HEK293 (cell line): ENCODE measurements at regions of chr19 and their contacts with region 1.

Region 1: GRCh38 chr19:35066691-35067563 is 25.4 kb downstream of the HPN start:
- H3K4me3 ChIP-seq: no peak overlapping the region
- H3K27ac ChIP-seq: no peak overlapping the region
- H3K4me1 ChIP-seq: peaks cover 10% of the 10 kb centered on the region
- CTCF ChIP-seq: peak; percentile 86

Region 2: DNA sequence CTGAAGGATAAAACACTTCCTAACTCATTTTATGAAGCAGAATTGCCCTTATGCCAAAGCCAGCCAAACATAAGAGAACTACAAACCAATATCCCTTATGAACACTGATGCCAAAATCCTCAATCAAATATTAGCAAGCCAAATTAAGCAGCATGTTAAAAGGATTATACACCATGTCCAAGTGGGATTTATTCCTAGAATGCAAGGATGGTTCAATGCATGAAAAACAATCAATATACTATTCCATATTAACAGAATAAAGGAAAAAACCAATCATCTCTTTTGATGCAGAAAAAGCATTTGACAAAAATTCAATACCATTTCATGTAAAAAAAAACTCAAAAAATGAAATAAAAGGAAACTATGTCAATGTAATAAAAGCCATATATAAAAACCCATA is 113.8 kb before region 1 on chr19:
- CTCF ChIA-PET with region 1: no interaction called
- POLR2A ChIA-PET with region 1: no interaction called
- H3K4me3 ChIP-seq: no peak overlapping the region
- H3K27ac ChIP-seq: no peak overlapping the region
- H3K4me1 ChIP-seq: no peaks in the 10 kb centered on the region
- CTCF ChIP-seq: no peak

Region 3: GRCh38 chr19:34963573-34964409 is 103.1 kb before region 1 on chr19 and contains the start of gene ZNF792:
- CTCF ChIA-PET with region 1: interaction called, 13 read pairs
- POLR2A ChIA-PET with region 1: no interaction called
- H3K4me3 ChIP-seq: peak within 1 kb of the TSS; percentile 57
- H3K27ac ChIP-seq: peak within 1 kb of the TSS; percentile 84
- H3K4me1 ChIP-seq: peaks cover 16% of the 10 kb centered on the region
- CTCF ChIP-seq: peak; percentile 47; the same call in 1 of the 2 replicates

Region 4: DNA sequence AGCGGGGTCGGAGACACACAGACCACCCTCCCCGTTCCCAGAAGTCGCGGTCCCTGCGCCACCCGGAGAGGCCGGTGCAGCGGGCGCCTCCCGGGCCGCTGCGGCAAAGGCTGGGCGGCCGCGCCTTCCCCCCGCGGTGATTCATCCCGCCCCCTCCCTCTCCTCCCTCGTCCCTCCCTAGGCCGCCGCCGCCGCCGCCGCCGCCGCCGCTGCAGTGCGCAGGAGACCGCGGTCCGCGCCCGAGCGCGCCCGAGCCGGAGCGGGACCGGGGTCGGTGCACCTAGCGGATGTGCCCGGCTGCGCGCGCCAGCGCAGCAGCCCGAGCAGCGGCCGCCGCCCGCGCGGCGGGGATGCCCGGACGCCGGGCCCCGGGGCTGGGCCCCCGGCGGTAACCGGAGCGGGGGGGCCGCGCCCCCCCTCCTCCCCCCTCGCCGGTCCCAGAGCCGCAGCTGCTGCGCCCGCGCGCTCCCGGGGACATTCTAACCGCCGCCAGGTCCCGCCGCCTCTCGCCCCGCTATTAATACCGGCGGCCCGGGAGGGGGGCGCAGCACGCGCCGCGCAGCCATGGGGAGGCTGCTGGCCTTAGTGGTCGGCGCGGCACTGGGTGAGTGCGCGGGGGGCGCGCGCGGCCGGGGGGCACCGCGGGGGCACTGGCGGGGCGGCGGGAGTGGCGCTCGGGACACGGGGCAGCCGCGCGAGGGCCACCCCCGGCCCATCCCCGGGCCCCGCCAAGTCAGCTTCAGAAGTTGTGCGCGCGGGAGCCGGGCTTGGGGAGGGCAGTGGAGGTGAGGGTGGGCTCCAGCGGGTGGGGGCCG is 36.5 kb before region 1 on chr19 and contains the start of gene SCN1B:
- CTCF ChIA-PET with region 1: interaction called, 11 read pairs
- POLR2A ChIA-PET with region 1: no interaction called
- H3K4me3 ChIP-seq: peak within 1 kb of the TSS; percentile 42
- H3K27ac ChIP-seq: peak within 1 kb of the TSS; percentile 74; the same call in 1 of the 2 replicates
- H3K4me1 ChIP-seq: peaks cover 14% of the 10 kb centered on the region
- CTCF ChIP-seq: no peak

Region 5: GRCh38 chr19:35080613-35081170 is 13.8 kb after region 1 on chr19:
- CTCF ChIA-PET with region 1: interaction called, 60 read pairs
- POLR2A ChIA-PET with region 1: interaction called, 3 read pairs
- H3K4me3 ChIP-seq: no peak overlapping the region
- H3K27ac ChIP-seq: no peak overlapping the region
- H3K4me1 ChIP-seq: no peaks in the 10 kb centered on the region
- CTCF ChIP-seq: peak; percentile 23; the same call in 1 of the 2 replicates

Region 6: DNA sequence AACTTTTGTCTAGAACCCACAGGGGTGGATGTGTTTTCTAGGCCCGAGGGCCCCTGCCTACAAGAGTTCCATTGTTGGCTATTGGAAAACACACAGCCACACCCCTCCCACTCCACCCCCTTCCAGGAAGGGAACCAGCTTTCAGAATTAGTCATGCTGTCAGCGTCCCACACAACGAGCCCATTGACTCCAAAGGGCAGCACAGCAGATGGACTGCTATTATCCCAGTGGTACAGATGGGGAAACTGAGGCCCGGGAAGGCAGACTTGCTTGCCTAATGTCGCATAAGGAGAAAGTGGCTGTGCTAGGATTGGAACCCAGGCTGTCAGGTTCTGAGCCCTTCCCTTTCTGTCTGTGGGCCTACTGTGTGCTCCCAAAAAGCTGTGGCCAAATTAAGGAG is 40.6 kb after region 1 on chr19:
- CTCF ChIA-PET with region 1: interaction called, 21 read pairs
- POLR2A ChIA-PET with region 1: no interaction called
- H3K4me3 ChIP-seq: no peak overlapping the region
- H3K27ac ChIP-seq: no peak overlapping the region
- H3K4me1 ChIP-seq: no peaks in the 10 kb centered on the region
- CTCF ChIP-seq: no peak

Region 7: DNA sequence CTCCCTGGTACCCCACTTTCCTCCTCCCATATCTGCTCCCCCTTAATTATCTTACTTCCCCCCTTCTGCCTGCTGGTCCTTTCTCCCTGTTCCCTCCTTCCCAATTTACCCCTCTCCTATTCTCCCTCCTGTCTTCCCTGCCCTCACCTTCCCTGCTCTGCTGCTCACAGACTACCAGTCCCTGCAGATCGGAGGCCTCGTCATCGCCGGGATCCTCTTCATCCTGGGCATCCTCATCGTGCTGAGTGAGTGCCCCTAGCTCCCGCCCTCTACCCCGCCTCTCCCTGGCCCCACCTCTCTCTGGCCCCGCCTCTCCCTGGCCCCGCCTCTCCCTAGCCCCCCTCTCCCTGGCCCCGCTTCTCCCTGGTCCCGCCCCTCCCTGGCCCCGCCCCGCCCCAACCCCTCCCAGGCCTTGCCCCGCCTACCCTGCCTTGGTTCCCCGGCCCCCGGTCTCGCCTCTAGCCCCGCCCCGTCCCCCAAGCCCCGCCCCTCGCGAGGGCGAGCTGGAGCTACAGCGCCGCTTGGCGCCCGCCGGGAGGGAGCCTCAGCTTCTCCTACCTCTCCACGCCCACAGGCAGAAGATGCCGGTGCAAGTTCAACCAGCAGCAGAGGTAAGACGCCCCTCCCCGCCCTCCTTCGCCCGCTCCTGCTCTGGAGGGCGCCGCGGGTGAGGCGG is 74.2 kb after region 1 on chr19:
- CTCF ChIA-PET with region 1: interaction called, 108 read pairs
- POLR2A ChIA-PET with region 1: interaction called, 6 read pairs
- H3K4me3 ChIP-seq: no peak overlapping the region
- H3K27ac ChIP-seq: no peak overlapping the region
- H3K4me1 ChIP-seq: peaks cover 31% of the 10 kb centered on the region
- CTCF ChIP-seq: peak; percentile 90

Region 8: DNA sequence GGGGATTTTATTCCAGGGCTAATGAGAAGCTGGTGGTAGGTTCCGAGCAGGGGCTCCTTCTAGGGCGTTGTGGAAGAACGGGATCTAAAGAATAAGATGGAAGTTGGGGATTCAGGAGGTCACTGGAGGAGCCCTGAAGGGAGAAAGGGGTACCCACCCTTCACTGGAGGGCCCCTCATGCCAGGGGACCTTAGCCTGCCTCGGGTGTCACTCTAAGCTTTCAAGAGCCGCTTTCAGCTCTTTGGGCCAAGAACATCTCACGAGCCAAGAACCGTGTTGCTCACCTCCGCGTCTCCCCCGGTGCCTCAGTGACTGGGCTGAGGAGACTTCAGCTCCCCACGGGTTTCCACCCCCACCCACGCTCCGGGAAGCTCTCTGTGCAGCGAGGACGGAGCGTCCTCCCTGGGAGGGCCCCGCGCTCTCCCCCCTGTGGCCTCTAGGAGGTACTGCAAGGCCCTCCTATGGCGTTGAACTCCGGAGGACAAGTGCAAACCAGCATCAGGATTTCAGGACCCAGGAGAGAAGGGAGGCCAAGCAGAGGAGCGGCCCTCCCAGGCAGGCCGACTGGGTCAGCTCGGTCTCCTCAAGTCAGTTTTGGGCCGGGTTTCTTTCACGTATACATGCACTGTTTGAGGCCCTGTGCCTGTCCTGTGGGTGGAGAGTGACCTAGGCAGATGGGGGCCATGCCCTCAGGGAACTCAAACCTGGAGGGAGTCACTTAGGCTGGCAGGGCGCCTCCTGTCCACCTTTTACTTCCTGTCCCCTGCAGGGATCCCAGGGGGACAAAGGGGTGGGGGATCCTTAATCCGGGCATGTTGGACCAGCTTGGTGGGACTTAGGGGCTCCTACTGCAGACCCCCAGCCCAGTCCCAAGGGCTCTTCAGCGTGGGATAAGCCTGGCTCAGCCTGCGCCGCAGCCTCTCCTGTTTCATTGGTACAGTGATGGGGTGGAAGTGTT is 428.5 kb after region 1 on chr19:
- CTCF ChIA-PET with region 1: interaction called, 10 read pairs
- POLR2A ChIA-PET with region 1: no interaction called
- H3K4me3 ChIP-seq: no peak overlapping the region
- H3K27ac ChIP-seq: no peak overlapping the region
- H3K4me1 ChIP-seq: no peaks in the 10 kb centered on the region
- CTCF ChIP-seq: peak; percentile 99